Activated CD4-positive, alpha-beta T cell treated with anti-CD3 and anti-CD28 coated beads for 36 hours (primary cell): ENCODE measurements at regions of chr9 and their contacts with region 1.

Region 1: GRCh38 chr9:35774907-35775635 is 16.3 kb upstream of the NPR2 start:
- DNase-seq: no peak
- ATAC-seq: no peak
- H3K4me3 Mint-ChIP-seq: no peak overlapping the region
- H3K27ac Mint-ChIP-seq: peak overlapping the region; percentile 33
- H3K4me1 Mint-ChIP-seq: no peaks in the 10 kb centered on the region
- H3K27me3 Mint-ChIP-seq: no peaks in the 10 kb centered on the region

Region 2: GRCh38 chr9:35790385-35791296 is 15.6 kb after region 1 on chr9:
- CTCF ChIA-PET with region 1: interaction called, 17 read pairs
- POLR2A ChIA-PET with region 1: no interaction called
- intact Hi-C with region 1: loop called in 1 of 2 experiments (anchors 2 kb)
- DNase-seq: peak; percentile 67
- ATAC-seq: peak; percentile 94
- H3K4me3 Mint-ChIP-seq: no peak overlapping the region
- H3K27ac Mint-ChIP-seq: no peak overlapping the region
- H3K4me1 Mint-ChIP-seq: peaks cover 3% of the 10 kb centered on the region
- H3K27me3 Mint-ChIP-seq: no peaks in the 10 kb centered on the region

Region 3: GRCh38 chr9:35795695-35796094 is 20.6 kb after region 1 on chr9:
- CTCF ChIA-PET with region 1: interaction called, 17 read pairs
- POLR2A ChIA-PET with region 1: no interaction called
- intact Hi-C with region 1: loop called in 1 of 2 experiments (anchors 2 kb)
- DNase-seq: no peak
- ATAC-seq: no peak
- H3K4me3 Mint-ChIP-seq: no peak overlapping the region
- H3K27ac Mint-ChIP-seq: no peak overlapping the region
- H3K4me1 Mint-ChIP-seq: peaks cover 25% of the 10 kb centered on the region
- H3K27me3 Mint-ChIP-seq: no peaks in the 10 kb centered on the region

Region 4: GRCh38 chr9:35891646-35892045 is 116.6 kb after region 1 on chr9:
- CTCF ChIA-PET with region 1: no interaction called
- POLR2A ChIA-PET with region 1: no interaction called
- intact Hi-C with region 1: no loop called
- DNase-seq: no peak
- ATAC-seq: no peak
- H3K4me3 Mint-ChIP-seq: no peak overlapping the region
- H3K27ac Mint-ChIP-seq: no peak overlapping the region
- H3K4me1 Mint-ChIP-seq: no peaks in the 10 kb centered on the region
- H3K27me3 Mint-ChIP-seq: peaks cover 7% of the 10 kb centered on the region